ENCODE measurements at regions of chr7 and their contacts with region 1.

Region 1: DNA sequence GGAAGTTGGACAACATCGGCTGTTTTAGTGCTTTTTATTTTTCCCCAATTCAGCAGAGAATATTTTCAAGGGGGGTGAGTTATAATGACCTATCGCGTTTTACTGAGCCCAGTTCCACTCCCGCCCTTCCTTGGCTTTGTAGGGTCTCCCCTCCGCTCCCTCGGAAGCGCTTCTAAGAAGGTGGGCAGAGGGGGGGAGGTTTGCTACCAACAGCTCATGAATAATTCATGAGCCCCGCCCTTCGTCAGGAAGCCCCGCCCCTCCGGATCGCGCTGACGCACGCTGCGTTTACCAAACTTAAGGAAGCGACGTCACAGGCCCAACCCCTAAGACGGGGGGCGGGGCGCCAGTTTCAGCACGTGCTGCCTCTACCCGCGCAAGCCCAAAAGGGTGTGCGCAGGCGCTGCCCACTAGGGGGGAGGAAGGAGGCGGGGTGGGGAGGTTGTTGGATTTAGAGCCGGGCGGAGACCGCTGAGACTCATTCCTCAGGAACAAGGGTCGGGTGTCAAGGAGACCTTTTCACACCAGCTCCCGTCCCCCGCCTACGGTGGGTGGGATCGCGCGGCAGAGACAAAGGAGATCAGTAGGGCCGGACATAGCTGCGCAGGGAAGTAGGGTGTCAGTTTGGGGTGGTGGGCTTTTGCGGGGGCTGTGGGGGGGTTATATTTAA is 529 bp upstream of the MEPCE start:
- DNase-seq: peak; percentile 100
- ATAC-seq: peak; percentile 59
- H3K4me3 ChIP-seq: peak overlapping the region; percentile 73 to 91 (median 85)
- H3K4me3 Mint-ChIP-seq: peak overlapping the region; percentile 97
- H3K27ac ChIP-seq: peak overlapping the region; percentile 99 to 100
- H3K27ac Mint-ChIP-seq: peak overlapping the region; percentile 100
- H3K4me1 ChIP-seq: peaks cover 24 to 35% of the 10 kb centered on the region in 2 donors
- H3K4me1 Mint-ChIP-seq: peaks cover 41% of the 10 kb centered on the region
- H3K27me3 ChIP-seq: no peaks in the 10 kb centered on the region
- H3K27me3 Mint-ChIP-seq: no peaks in the 10 kb centered on the region
- CTCF ChIP-seq: no peak

Region 2: GRCh38 chr7:100148559-100149350 is 280.3 kb before region 1 on chr7 and contains the start of gene LAMTOR4:
- CTCF ChIA-PET with region 1: no interaction called
- POLR2A ChIA-PET with region 1: interaction called, 9 read pairs
- intact Hi-C with region 1: loop called (anchors 1 kb)
- DNase-seq: peak; percentile 99
- ATAC-seq: peak; percentile 97
- H3K4me3 ChIP-seq: peak within 1 kb of the TSS; percentile 65 to 98 (median 75)
- H3K4me3 Mint-ChIP-seq: peak within 1 kb of the TSS; percentile 88
- H3K27ac ChIP-seq: peak within 1 kb of the TSS; percentile 82 to 97
- H3K27ac Mint-ChIP-seq: peak within 1 kb of the TSS; percentile 95
- H3K4me1 ChIP-seq: peaks cover 31 to 43% of the 10 kb centered on the region in 2 donors
- H3K4me1 Mint-ChIP-seq: peaks cover 34% of the 10 kb centered on the region
- H3K27me3 ChIP-seq: no peaks in the 10 kb centered on the region
- H3K27me3 Mint-ChIP-seq: no peaks in the 10 kb centered on the region
- CTCF ChIP-seq: no peak
- total RNA-seq, gene LAMTOR4: 214 TPM in 2 replicates

Region 3: DNA sequence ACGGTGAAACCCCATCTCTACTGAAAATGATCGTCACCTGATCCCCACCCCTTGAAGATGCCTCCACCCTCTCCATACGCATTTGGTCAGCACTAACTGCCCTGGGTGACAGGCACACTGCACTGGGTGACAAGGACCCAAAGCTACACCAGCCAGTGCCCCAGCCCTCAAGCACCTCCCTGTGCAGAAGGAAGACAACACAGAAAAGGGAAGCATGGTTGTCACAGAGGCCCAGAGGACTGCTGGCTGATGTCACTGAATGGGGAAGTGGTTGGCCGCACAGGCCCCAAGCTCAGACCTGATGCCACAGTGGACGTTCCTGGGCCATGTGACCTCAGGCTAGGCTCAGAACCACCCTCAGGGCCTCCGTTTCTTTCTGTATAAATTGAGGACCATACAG is 60.0 kb before region 1 on chr7:
- CTCF ChIA-PET with region 1: interaction called, 10 read pairs
- POLR2A ChIA-PET with region 1: interaction called, 44 read pairs
- intact Hi-C with region 1: loop called (anchors 1 kb)
- DNase-seq: peak; percentile 95
- ATAC-seq: peak; percentile 84
- H3K4me3 ChIP-seq: no peak overlapping the region
- H3K4me3 Mint-ChIP-seq: peak overlapping the region; percentile 87
- H3K27ac ChIP-seq: peak overlapping the region; percentile 97 to 99
- H3K27ac Mint-ChIP-seq: peak overlapping the region; percentile 99
- H3K4me1 ChIP-seq: peaks cover 68 to 86% of the 10 kb centered on the region in 2 donors
- H3K4me1 Mint-ChIP-seq: peaks cover 81% of the 10 kb centered on the region
- H3K27me3 ChIP-seq: no peaks in the 10 kb centered on the region
- H3K27me3 Mint-ChIP-seq: no peaks in the 10 kb centered on the region
- CTCF ChIP-seq: no peak

Region 4: DNA sequence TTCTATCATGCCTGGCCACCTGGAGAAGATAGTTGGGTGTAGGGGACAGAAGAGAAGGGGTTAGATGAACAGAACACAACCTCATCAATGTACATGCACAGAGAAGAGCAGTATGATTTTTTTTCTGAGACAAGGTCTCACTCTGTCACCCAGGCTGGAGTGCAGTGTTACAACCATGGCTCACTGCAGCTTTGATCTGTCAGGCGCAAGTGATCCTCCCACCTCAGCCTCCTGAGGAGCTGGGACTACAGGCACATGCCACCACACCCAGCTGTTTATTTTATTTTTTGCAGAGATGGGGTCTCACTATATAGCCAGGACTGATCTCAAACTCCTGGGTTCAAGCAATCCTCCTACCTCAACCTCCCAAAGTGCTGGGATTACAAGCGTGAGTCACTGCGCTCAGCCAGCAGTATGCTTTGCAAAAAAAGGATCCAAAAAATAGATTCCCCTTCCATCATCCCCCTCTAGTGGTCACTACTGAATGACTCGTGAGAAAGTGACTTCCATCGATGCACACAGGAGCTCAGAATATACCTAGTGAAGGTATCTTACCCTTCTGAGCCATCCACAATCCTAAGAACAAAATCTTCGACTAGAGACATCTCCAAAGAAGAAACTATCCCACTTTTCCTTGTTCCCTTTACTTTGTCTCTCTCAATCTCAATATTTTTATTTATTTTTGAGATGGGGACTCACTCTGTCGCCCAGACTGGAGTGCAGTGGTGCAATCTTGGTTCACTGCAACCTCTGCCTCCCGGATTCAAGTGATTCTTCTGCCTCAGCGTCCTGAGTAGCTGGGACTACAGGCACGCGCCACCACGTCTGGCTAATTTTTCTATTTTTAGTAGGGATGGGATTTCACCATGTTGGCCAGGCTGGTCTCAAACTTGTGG is 21.6 kb before region 1 on chr7:
- CTCF ChIA-PET with region 1: interaction called, 19 read pairs
- POLR2A ChIA-PET with region 1: interaction called, 11 read pairs
- intact Hi-C with region 1: no loop called
- DNase-seq: peak; percentile 86
- ATAC-seq: peak; percentile 92
- H3K4me3 ChIP-seq: no peak overlapping the region
- H3K4me3 Mint-ChIP-seq: no peak overlapping the region
- H3K27ac ChIP-seq: no peak overlapping the region
- H3K27ac Mint-ChIP-seq: no peak overlapping the region
- H3K4me1 ChIP-seq: peaks cover 15 to 20% of the 10 kb centered on the region in 2 donors
- H3K4me1 Mint-ChIP-seq: peaks cover 9% of the 10 kb centered on the region
- H3K27me3 ChIP-seq: no peaks in the 10 kb centered on the region
- H3K27me3 Mint-ChIP-seq: no peaks in the 10 kb centered on the region
- CTCF ChIP-seq: peak; percentile 81

Region 5: GRCh38 chr7:100478966-100479665 is 50.0 kb after region 1 on chr7 and contains the start of gene TSC22D4:
- CTCF ChIA-PET with region 1: interaction called, 9 read pairs
- POLR2A ChIA-PET with region 1: interaction called, 7 read pairs
- intact Hi-C with region 1: loop called (anchors 1 kb)
- DNase-seq: peak; percentile 92
- ATAC-seq: peak; percentile 70
- H3K4me3 ChIP-seq: peak within 1 kb of the TSS; percentile 90 to 99 (median 96)
- H3K4me3 Mint-ChIP-seq: peak within 1 kb of the TSS; percentile 97
- H3K27ac ChIP-seq: peak within 1 kb of the TSS; percentile 72 to 89
- H3K27ac Mint-ChIP-seq: peak within 1 kb of the TSS; percentile 91
- H3K4me1 ChIP-seq: peaks cover 34 to 51% of the 10 kb centered on the region in 2 donors
- H3K4me1 Mint-ChIP-seq: peaks cover 37% of the 10 kb centered on the region
- H3K27me3 ChIP-seq: no peaks in the 10 kb centered on the region
- H3K27me3 Mint-ChIP-seq: no peaks in the 10 kb centered on the region
- CTCF ChIP-seq: no peak
- total RNA-seq, gene TSC22D4: 92.8 and 95.0 TPM in 2 replicates

Region 6: DNA sequence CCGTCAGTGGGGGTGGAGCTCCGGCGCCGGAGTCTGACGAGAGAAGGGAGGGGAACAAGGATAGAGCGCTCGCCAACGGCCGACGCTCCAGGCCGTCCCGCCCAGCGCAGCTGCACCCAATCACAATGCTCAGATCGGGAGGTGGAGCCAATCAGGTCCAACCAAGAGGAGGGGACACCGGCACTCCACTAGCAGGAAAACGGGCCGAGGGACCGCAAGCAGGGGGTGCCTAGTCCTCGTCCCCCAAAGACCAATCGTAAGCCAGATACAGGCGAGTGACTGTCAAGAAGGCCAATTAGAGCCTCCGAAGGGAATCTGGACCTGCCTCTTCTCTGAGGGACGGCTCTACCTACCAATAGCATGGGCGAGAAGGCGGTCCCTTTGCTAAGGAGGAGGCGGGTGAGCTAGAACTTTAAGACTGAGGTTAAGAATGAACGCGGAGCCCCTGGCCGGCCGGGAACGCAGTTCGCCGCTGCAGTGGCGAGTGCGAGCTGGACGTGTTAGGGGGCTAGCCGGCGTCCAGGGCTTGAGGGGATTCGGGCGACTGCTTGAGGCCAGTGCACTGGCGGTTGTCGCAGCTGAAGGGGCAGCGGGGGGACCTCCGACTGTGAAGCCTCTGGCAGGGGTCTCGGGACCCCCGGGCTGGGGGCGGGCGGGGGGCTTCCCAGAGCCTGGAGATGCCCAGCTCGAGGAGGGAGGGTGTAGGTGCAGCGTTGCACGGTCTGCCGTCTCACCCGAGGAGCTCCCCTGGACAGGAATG is 157.3 kb after region 1 on chr7 and contains the start of gene FBXO24:
- CTCF ChIA-PET with region 1: no interaction called
- POLR2A ChIA-PET with region 1: interaction called, 13 read pairs
- intact Hi-C with region 1: loop called (anchors 1 kb)
- DNase-seq: peak; percentile 100
- ATAC-seq: peak; percentile 79
- H3K4me3 ChIP-seq: peak within 1 kb of the TSS; percentile 82 to 93 (median 85)
- H3K4me3 Mint-ChIP-seq: peak within 1 kb of the TSS; percentile 98
- H3K27ac ChIP-seq: peak within 1 kb of the TSS; percentile 94 to 97
- H3K27ac Mint-ChIP-seq: peak within 1 kb of the TSS; percentile 99
- H3K4me1 ChIP-seq: peaks cover 27 to 38% of the 10 kb centered on the region in 2 donors
- H3K4me1 Mint-ChIP-seq: peaks cover 44% of the 10 kb centered on the region
- H3K27me3 ChIP-seq: peaks cover 0 to 14% (median 5%) of the 10 kb centered on the region in 4 experiments
- H3K27me3 Mint-ChIP-seq: peaks cover 9% of the 10 kb centered on the region
- CTCF ChIP-seq: no peak
- total RNA-seq, gene FBXO24: 1.6 and 2.2 TPM in 2 replicates

Region 7: GRCh38 chr7:100673300-100673941 is 244.3 kb after region 1 on chr7 and contains the start of gene GNB2:
- CTCF ChIA-PET with region 1: no interaction called
- POLR2A ChIA-PET with region 1: interaction called, 5 read pairs
- intact Hi-C with region 1: loop called (anchors 2 kb)
- DNase-seq: peak; percentile 99
- ATAC-seq: peak; percentile 65
- H3K4me3 ChIP-seq: peak within 1 kb of the TSS; percentile 53 to 99 (median 98)
- H3K4me3 Mint-ChIP-seq: peak within 1 kb of the TSS; percentile 96
- H3K27ac ChIP-seq: peak within 1 kb of the TSS; percentile 89 to 97
- H3K27ac Mint-ChIP-seq: peak within 1 kb of the TSS; percentile 97
- H3K4me1 ChIP-seq: peaks cover 0 to 6% of the 10 kb centered on the region in 2 donors
- H3K4me1 Mint-ChIP-seq: peaks cover 8% of the 10 kb centered on the region
- H3K27me3 ChIP-seq: no peaks in the 10 kb centered on the region
- H3K27me3 Mint-ChIP-seq: no peaks in the 10 kb centered on the region
- CTCF ChIP-seq: no peak
- total RNA-seq, gene GNB2: 127 TPM in 2 replicates

Region 8: GRCh38 chr7:100859856-100860255 is 430.8 kb after region 1 on chr7:
- CTCF ChIA-PET with region 1: no interaction called
- POLR2A ChIA-PET with region 1: no interaction called
- intact Hi-C with region 1: no loop called
- DNase-seq: no peak
- ATAC-seq: no peak
- H3K4me3 ChIP-seq: no peak overlapping the region
- H3K4me3 Mint-ChIP-seq: no peak overlapping the region
- H3K27ac ChIP-seq: no peak overlapping the region
- H3K27ac Mint-ChIP-seq: no peak overlapping the region
- H3K4me1 ChIP-seq: no peaks in the 10 kb centered on the region
- H3K4me1 Mint-ChIP-seq: peaks cover 5% of the 10 kb centered on the region
- H3K27me3 ChIP-seq: no peaks in the 10 kb centered on the region
- H3K27me3 Mint-ChIP-seq: no peaks in the 10 kb centered on the region
- CTCF ChIP-seq: no peak

Measured in B cell (primary cell).